ENCODE measurements at regions of chr6 and their contacts with region 1.

Region 1: GRCh38 chr6:32971581-32972352 is 3.4 kb downstream of the BRD2 start:
- DNase-seq: peak; percentile 91

Region 2: DNA sequence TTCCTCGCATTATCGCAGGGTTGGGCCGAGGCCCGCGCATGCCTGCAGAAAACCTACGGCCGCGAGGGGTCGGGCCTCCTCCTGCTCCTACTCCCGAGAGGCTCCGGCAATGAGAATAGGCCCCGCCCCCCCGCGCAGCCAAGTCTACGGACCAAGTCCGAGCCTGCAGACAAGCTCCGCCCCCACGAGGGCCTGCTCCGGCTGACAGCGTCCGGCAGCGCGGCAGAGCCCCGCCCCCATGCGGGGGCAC is 776.2 kb before region 1 on chr6:
- CTCF ChIA-PET with region 1: no interaction called
- POLR2A ChIA-PET with region 1: interaction called, 10 read pairs
- DNase-seq: peak; percentile 98

Region 3: DNA sequence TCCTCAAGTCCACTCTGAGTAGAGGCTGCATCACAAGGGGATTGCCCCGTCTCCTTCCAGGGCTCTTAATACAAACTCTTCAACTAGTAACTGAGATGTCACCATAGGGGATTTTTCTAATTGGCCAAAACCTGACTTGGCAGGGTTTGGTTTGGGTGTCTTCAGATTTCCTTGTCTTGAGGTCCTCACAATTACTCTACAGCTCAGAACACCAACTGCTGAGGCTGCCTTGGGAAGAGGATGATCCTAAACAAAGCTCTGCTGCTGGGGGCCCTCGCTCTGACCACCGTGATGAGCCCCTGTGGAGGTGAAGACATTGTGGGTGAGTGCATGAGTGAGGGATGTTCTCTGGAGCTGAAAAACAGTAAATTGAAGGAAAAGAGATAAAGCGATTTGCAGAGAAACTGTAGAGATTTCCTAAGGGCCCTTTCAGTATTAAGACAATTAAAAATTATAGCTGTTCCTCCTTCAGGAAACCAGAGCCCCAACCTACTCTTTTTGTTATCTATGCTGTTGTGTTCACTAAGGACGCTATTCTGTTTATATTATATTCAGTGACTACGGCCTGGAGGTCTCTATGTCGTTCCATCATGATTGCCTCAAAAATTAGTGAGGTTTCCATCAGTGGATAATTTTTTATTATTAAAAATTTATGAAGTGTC is 334.4 kb before region 1 on chr6 and contains the start of gene HLA-DQA1:
- CTCF ChIA-PET with region 1: no interaction called
- POLR2A ChIA-PET with region 1: no interaction called
- DNase-seq: no peak

Region 4: DNA sequence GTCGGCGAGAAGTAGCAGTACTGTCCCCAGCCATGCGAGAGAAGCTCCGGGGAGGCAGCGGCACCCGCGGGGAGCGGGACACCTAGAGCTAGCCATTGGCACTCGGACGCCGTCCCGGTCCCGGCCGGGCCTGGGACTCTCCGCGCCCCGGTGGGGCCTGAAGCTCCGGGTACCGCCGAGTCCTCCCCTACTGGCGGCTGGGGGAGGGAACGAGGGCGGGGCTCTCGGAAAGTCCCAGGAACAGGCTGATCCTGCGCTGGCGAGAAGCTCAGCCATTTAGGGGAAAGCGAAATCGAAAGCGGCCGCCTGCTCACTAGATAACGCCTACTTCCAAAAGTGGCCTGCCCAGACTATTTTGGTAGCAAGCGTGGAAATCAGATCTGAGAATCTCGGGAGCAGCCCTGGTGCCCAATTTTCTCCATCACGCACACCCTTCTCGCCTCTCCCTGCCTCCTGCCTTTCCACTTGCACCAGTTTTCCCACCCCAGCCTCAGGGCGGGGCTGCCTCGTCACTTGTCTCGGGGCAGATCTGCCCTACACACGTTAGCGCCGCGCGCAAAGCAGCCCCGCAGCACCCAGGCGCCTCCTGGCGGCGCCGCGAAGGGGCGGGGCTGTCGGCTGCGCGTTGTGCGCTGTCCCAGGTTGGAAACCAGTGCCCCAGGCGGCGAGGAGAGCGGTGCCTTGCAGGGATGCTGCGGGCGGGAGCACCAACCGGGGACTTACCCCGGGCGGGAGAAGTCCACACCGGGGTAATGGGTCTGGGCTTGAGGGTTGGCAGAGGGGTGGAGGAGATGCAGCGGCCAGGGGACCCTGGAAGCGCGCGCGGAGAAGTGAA is 118.0 kb before region 1 on chr6 and contains the starts of genes PSMB9 and TAP1:
- CTCF ChIA-PET with region 1: interaction called, 3 read pairs
- POLR2A ChIA-PET with region 1: interaction called, 19 read pairs
- DNase-seq: peak; percentile 97

Region 5: DNA sequence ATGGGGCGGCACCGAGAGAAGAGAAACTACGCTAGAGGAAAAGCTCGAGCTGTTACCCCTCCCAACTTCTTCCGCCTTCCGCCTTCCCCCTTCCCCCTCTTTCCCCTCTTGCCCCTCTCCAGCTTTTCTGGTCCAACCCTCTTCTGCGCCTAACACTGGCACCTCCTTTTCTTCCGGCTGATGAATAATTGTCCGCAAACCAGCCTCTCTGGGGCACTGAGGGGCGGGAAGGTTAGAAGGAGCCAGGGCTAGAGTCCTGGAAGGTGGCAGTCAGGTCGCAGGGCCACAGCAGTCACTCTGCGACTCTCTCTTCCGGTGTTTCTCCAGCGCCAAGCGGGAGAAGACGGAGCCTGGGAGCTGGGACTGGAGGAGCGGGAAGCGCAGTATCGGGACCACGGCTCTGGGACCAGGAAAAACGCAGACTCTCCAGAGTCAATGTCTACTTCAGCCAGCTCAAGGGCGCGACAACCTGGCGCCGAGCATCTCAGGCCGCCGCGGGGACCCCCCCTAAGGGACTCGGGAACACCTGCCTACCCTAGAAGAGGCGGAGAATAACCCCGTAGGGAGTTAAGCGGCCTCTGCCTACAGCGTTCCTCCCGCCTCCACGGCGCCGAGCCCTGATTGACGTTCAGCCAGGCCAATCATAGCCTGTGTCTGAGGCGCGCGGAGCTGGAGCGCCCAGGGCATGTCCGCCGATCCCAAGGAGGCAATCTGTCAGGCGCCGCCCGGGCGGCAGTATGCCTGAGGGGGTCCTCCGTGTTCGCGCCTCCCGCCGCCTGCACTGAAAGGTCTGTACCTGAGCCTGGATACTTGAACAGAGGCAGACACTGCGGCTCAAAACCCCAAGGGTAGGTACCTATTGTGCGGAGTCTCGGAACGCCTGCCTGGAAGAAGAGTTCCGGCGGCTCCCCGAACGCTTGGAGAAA is 77.4 kb before region 1 on chr6:
- CTCF ChIA-PET with region 1: no interaction called
- POLR2A ChIA-PET with region 1: interaction called, 166 read pairs
- DNase-seq: peak; percentile 99

Region 6: DNA sequence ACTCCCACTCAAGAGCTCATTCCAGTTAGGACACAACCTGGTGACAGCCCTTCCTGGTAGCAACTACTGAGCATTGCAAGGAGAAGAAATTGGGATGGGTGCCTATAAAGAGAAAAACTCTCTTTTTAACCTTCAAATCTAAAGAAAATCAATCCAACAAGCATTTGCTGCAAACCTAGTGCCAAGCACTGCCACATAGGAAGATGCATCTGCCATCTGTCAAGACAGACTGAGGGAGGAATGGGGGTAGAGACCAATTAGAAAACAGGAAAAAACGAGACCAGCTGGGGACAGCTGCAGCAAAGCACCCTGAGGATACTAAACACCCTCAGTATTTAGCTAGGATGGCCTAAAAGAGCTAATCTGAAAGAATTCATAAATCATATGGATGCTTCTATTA is 58.8 kb before region 1 on chr6:
- CTCF ChIA-PET with region 1: no interaction called
- POLR2A ChIA-PET with region 1: interaction called, 22 read pairs
- DNase-seq: no peak

Region 7: DNA sequence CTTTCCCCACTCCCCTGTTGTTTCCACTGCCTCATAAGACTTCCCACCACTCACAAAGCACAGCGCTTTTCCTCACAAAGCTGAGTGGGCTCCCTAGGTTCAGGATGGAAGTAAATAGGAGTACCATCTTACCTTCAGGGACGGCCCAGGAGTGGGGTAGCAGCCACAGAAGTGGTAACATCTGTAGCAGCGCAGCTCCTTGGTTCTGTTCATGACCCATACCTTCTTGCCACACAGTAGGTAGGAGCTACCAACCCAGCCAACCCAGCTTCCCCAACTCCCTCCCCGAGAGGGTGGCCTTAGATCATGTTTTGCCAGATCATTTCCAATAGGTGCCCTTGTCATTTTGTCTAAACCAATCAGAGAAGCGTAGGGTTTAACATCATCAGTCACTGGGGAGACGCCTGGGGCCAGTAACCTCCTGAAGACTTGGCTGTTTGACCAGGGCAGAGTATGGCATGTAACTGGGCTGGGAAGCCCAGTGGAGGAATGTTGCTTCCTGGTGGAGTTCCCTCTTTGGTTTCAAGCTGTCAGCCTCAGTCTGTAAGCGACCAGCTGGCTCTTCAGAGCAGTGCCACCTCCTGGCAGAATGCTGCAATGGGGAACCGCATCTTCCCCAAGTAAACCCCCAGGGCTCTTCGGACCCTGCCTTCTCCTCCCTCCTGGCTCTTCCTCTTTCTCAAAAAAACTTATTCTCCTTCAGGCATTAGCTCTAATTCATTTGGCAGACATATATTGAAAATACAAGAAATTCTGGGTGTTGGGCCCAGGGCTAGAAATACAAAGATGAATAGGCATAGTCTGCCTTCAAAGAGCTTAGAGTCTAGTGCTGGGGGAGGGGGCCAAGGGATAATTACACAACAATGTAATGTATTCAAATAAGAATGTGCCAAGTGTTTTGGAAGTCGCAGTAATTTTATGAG is 18.7 kb before region 1 on chr6 and contains the start of gene HLA-DMA:
- CTCF ChIA-PET with region 1: interaction called, 23 read pairs
- POLR2A ChIA-PET with region 1: interaction called, 208 read pairs
- DNase-seq: peak; percentile 55

Region 8: GRCh38 chr6:33248925-33249731 is 277.4 kb after region 1 on chr6:
- CTCF ChIA-PET with region 1: no interaction called
- POLR2A ChIA-PET with region 1: interaction called, 25 read pairs
- DNase-seq: peak; percentile 91